HepG2 (cell line): ENCODE measurements at regions of chr6 and their contacts with region 1.

Region 1: GRCh38 chr6:143427109-143427817 is 23.2 kb downstream of the ADAT2 start:
- DNase-seq: peak; percentile 69
- ATAC-seq: peak; percentile 100
- H3K4me3 ChIP-seq: no peak overlapping the region
- H3K27ac ChIP-seq: no peak overlapping the region
- H3K4me1 ChIP-seq: peaks cover 14% of the 10 kb centered on the region
- H3K27me3 ChIP-seq: no peaks in the 10 kb centered on the region
- CTCF ChIP-seq: peak; percentile 98
- EP300 ChIP-seq: no peak
- POLR2A ChIP-seq: no peak
- RAD21 ChIP-seq: peak; percentile 99

Region 2: DNA sequence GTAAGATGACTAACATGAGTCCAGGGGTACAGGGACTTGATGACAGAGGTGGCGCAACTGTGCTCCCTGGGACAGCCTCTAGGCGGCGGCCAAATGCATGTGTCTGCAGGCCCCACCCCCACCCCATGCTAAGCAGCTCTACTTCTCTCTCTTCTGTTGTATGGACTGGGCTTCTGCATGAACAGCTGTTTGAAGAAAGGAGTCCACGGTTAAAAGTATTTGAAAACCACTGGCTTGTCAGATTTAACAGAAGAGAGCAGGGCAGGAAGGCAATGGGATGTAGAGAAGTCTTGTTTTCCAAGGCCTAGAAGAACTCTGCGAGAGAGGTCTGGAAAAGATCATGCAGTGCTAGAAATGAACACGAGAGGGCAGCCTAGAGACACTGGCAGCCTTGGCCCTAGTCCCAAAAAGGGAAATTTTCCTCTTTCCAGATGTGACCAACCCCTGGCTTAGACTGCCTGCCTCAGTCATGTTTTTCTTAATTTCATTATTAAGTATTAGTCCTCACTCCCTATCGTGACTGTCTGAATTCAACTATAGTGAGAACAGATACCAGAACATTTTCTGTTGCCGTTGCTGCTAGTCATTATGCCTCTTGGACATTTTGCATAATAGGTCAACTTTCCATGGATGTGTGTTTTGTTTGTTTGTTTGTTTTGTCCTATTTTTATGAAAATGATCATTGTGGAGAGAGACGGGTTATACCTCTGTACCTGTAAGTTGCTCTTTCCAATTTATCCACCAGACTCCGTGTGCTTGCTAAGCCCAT is 860.5 kb before region 1 on chr6:
- CTCF ChIA-PET with region 1: interaction called, 3 read pairs
- POLR2A ChIA-PET with region 1: no interaction called
- in situ Hi-C with region 1: no loop called
- intact Hi-C with region 1: loop called (anchors 2 kb)
- DNase-seq: peak; percentile 64
- ATAC-seq: peak; percentile 92
- H3K4me3 ChIP-seq: no peak overlapping the region
- H3K27ac ChIP-seq: no peak overlapping the region
- H3K4me1 ChIP-seq: no peaks in the 10 kb centered on the region
- H3K27me3 ChIP-seq: no peaks in the 10 kb centered on the region; a peak in 2 of 5 replicates
- CTCF ChIP-seq: peak; percentile 87
- EP300 ChIP-seq: no peak
- POLR2A ChIP-seq: no peak
- RAD21 ChIP-seq: peak; percentile 70

Region 3: DNA sequence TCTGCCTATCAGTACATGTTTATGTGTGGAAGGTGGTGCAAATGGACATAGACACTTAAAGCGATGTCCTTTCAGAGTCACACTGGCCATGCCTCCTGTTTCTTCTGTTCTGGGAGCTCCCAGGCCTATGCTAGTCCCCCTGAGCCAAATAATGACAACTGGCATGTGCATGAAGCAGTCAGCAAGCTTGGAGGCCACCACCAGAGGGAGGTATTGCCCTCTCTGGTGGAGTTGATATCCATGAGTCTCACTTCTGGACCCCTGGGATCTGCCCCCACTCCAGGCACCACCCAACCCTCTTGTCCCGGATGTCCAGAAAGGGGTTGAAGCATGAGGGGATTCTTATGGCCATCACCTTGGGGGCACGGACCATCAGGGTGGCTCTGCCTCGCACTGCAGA is 194.4 kb before region 1 on chr6:
- CTCF ChIA-PET with region 1: interaction called, 12 read pairs
- POLR2A ChIA-PET with region 1: no interaction called
- in situ Hi-C with region 1: loop called (anchors 5 kb)
- intact Hi-C with region 1: loop called (anchors 1 kb)
- DNase-seq: peak; percentile 65
- ATAC-seq: peak; percentile 98
- H3K4me3 ChIP-seq: no peak overlapping the region
- H3K27ac ChIP-seq: no peak overlapping the region
- H3K4me1 ChIP-seq: no peaks in the 10 kb centered on the region
- H3K27me3 ChIP-seq: no peaks in the 10 kb centered on the region
- CTCF ChIP-seq: peak; percentile 88
- EP300 ChIP-seq: no peak
- POLR2A ChIP-seq: no peak
- RAD21 ChIP-seq: peak; percentile 86

Region 4: DNA sequence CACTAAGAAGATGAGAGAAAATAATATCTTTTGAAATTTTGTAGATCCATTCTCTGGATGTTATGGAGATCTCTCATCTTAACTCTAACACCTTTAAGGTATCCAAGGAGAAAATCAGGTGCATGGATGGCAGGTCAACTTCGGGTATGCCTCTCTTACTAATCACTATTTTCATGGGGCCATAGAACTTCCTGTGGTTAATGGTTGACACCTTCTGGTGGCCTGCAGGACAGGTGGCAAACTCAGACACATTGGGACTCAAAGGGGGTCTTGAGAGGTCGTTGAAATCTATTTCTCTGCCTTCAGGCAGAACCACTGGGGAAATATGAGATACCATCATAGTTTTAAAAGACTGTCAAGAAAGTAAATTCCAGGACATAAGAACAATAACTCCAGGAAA is 53.2 kb before region 1 on chr6:
- CTCF ChIA-PET with region 1: no interaction called
- POLR2A ChIA-PET with region 1: no interaction called
- in situ Hi-C with region 1: no loop called
- intact Hi-C with region 1: loop called (anchors 2 kb)
- DNase-seq: no peak
- ATAC-seq: no peak
- H3K4me3 ChIP-seq: no peak overlapping the region
- H3K27ac ChIP-seq: no peak overlapping the region
- H3K4me1 ChIP-seq: no peaks in the 10 kb centered on the region; the same call in 1 of the 2 replicates
- H3K27me3 ChIP-seq: no peaks in the 10 kb centered on the region
- CTCF ChIP-seq: peak; percentile 38
- EP300 ChIP-seq: no peak
- POLR2A ChIP-seq: no peak
- RAD21 ChIP-seq: no peak